A549 (cell line): ENCODE measurements at regions of chr7 and their contacts with region 1.

Region 1: GRCh38 chr7:5363729-5364128 is 59.9 kb downstream of the TNRC18 start:
- DNase-seq: no peak
- ATAC-seq: no peak
- H3K4me3 ChIP-seq: no peak overlapping the region
- H3K27ac ChIP-seq: no peak overlapping the region
- H3K4me1 ChIP-seq: no peaks in the 10 kb centered on the region
- CTCF ChIP-seq: no peak
- EP300 ChIP-seq: no peak
- POLR2A ChIP-seq: no peak
- RAD21 ChIP-seq: no peak

Region 2: GRCh38 chr7:5223646-5224340 is 139.9 kb before region 1 on chr7:
- CTCF ChIA-PET with region 1: no interaction called
- POLR2A ChIA-PET with region 1: no interaction called
- DNase-seq: no peak
- ATAC-seq: 0 out of 6 replicates have a peak, but pooled peaks have one; percentile 14 to 22
- H3K4me3 ChIP-seq: no peak overlapping the region
- H3K27ac ChIP-seq: no peak overlapping the region
- H3K4me1 ChIP-seq: peaks cover 7% of the 10 kb centered on the region; the same call in 1 of the 3 replicates
- CTCF ChIP-seq: no peak
- EP300 ChIP-seq: no peak
- POLR2A ChIP-seq: no peak
- RAD21 ChIP-seq: no peak

Region 3: GRCh38 chr7:5237286-5237685 is 126.4 kb before region 1 on chr7:
- CTCF ChIA-PET with region 1: interaction called, 23 read pairs
- POLR2A ChIA-PET with region 1: no interaction called
- DNase-seq: no peak
- ATAC-seq: no peak
- H3K4me3 ChIP-seq: no peak overlapping the region
- H3K27ac ChIP-seq: no peak overlapping the region
- H3K4me1 ChIP-seq: no peaks in the 10 kb centered on the region
- CTCF ChIP-seq: no peak
- EP300 ChIP-seq: no peak
- POLR2A ChIP-seq: no peak
- RAD21 ChIP-seq: no peak

Region 4: DNA sequence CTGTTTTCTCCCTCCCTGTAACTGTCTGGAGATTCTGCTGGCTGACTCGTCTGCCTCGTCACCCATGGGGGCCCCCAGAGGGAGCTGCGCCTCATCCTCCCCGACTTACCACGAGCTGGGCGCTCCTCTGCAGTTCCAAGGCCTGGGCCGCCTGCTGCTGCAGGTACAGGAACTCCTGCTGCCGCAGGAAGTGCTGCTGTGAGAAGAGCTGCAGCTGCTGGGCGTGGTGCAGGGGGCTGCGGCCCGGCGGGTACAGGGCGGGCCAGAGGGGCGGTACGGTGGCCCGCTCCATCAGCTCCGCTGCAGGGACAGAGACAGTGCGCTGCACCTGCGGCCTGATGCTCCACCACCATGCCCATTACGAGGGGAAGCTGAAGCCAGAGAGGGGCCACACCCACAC is 12.2 kb after region 1 on chr7:
- CTCF ChIA-PET with region 1: interaction called, 31 read pairs
- POLR2A ChIA-PET with region 1: no interaction called
- DNase-seq: no peak
- ATAC-seq: no peak; a peak in 2 of 6 replicates
- H3K4me3 ChIP-seq: no peak overlapping the region
- H3K27ac ChIP-seq: no peak overlapping the region
- H3K4me1 ChIP-seq: no peaks in the 10 kb centered on the region
- CTCF ChIP-seq: no peak
- EP300 ChIP-seq: no peak
- POLR2A ChIP-seq: no peak
- RAD21 ChIP-seq: no peak

Region 5: DNA sequence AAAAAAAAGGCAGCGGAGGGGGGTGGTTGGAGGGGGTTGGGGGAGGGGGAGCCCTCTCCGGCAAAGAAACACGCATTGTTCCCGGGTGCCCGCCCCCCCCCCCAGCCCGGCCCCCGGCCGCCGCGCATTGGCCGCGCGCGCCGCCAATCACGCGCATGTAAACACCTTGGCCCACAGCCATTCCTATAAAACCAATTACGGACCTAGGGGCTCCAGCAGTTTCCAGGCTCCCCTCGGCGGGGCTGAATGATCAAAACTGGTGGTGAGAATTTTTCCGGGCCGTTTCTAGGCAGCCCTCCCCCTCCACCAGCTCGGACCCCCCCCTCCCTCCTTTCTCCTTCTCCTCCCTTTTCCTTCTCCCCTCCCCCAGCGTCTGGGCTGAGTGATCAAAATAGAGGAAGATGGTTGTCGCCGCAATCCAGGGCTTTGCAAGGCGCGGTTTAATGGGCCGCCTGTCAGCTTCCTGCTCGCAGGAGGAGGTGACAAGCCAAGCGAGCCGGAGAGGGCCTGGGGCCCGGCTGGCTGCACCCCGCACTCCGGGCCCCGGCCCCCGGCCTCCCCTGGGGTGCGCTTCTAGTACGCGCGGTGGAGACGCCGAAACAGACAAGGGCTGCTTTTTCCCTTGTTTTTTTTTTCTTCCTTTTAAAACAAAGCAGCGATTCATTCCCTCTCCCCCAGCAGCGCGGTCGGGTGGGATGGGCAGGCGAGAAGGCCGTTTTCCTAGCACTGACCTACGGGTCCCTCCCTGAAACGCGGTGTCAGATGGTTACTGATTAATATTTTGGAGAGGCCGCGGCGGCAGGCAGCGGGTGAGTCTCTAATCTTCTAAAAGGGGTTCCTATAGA is 60.3 kb after region 1 on chr7:
- CTCF ChIA-PET with region 1: interaction called, 14 read pairs
- POLR2A ChIA-PET with region 1: no interaction called
- DNase-seq: peak; percentile 80 to 98
- ATAC-seq: peak; percentile 16 to 25
- H3K4me3 ChIP-seq: peak overlapping the region; percentile 74
- H3K27ac ChIP-seq: peak overlapping the region; percentile 88 to 96
- H3K4me1 ChIP-seq: peaks cover 21% of the 10 kb centered on the region
- CTCF ChIP-seq: no peak
- EP300 ChIP-seq: no peak
- POLR2A ChIP-seq: no peak
- RAD21 ChIP-seq: no peak

Region 6: GRCh38 chr7:5462216-5462615 is 98.5 kb after region 1 on chr7:
- CTCF ChIA-PET with region 1: interaction called, 10 read pairs
- POLR2A ChIA-PET with region 1: no interaction called
- DNase-seq: no peak
- ATAC-seq: no peak
- H3K4me3 ChIP-seq: no peak overlapping the region
- H3K27ac ChIP-seq: no peak overlapping the region
- H3K4me1 ChIP-seq: no peaks in the 10 kb centered on the region
- CTCF ChIP-seq: no peak
- EP300 ChIP-seq: no peak
- POLR2A ChIP-seq: no peak
- RAD21 ChIP-seq: no peak

Region 7: GRCh38 chr7:5494683-5495561 is 131.2 kb after region 1 on chr7:
- CTCF ChIA-PET with region 1: interaction called, 17 read pairs
- POLR2A ChIA-PET with region 1: no interaction called
- DNase-seq: peak; percentile 86 to 88
- ATAC-seq: peak; percentile 80 to 87
- H3K4me3 ChIP-seq: no peak overlapping the region
- H3K27ac ChIP-seq: peak overlapping the region; percentile 66 to 81
- H3K4me1 ChIP-seq: peaks cover 24% of the 10 kb centered on the region
- CTCF ChIP-seq: peak; percentile 93
- EP300 ChIP-seq: no peak
- POLR2A ChIP-seq: no peak
- RAD21 ChIP-seq: peak; percentile 98

Region 8: GRCh38 chr7:5625938-5626337 is 262.2 kb after region 1 on chr7:
- CTCF ChIA-PET with region 1: no interaction called
- POLR2A ChIA-PET with region 1: no interaction called
- DNase-seq: peak in 1 of 2 experiments; percentile 47
- ATAC-seq: peak in 1 of 2 experiments; percentile 52; a peak in 3 of 6 replicates
- H3K4me3 ChIP-seq: no peak overlapping the region
- H3K27ac ChIP-seq: no peak overlapping the region
- H3K4me1 ChIP-seq: peaks cover 15% of the 10 kb centered on the region; the same call in 2 of the 3 replicates
- CTCF ChIP-seq: no peak
- EP300 ChIP-seq: no peak
- POLR2A ChIP-seq: no peak
- RAD21 ChIP-seq: no peak